ENCODE measurements at regions of chr4 and their contacts with region 1.

Region 1: GRCh38 chr4:139972305-139972704 is 181.7 kb downstream of the MAML3 start:
- DNase-seq: no peak
- ATAC-seq: no peak
- H3K4me3 ChIP-seq: no peak overlapping the region
- H3K4me3 Mint-ChIP-seq: no peak overlapping the region
- H3K27ac ChIP-seq: no peak overlapping the region
- H3K27ac Mint-ChIP-seq: no peak overlapping the region
- H3K4me1 ChIP-seq: no peaks in the 10 kb centered on the region
- H3K4me1 Mint-ChIP-seq: peaks cover 5% of the 10 kb centered on the region
- H3K27me3 ChIP-seq: no peaks in the 10 kb centered on the region
- H3K27me3 Mint-ChIP-seq: no peaks in the 10 kb centered on the region
- CTCF ChIP-seq: no peak

Region 2: GRCh38 chr4:139988863-139989733 is 16.8 kb after region 1 on chr4:
- CTCF ChIA-PET with region 1: no interaction called
- POLR2A ChIA-PET with region 1: no interaction called
- intact Hi-C with region 1: loop called in 1 of 2 experiments (anchors 1 kb)
- DNase-seq: peak in 1 of 9 experiments; percentile 14
- ATAC-seq: no peak
- H3K4me3 ChIP-seq: no peak overlapping the region
- H3K4me3 Mint-ChIP-seq: no peak overlapping the region
- H3K27ac ChIP-seq: no peak overlapping the region
- H3K27ac Mint-ChIP-seq: no peak overlapping the region
- H3K4me1 ChIP-seq: no peaks in the 10 kb centered on the region
- H3K4me1 Mint-ChIP-seq: no peaks in the 10 kb centered on the region
- H3K27me3 ChIP-seq: no peaks in the 10 kb centered on the region
- H3K27me3 Mint-ChIP-seq: no peaks in the 10 kb centered on the region
- CTCF ChIP-seq: no peak